ENCODE measurements at regions of chr18 and their contacts with region 1.

Region 1: GRCh38 chr18:21851327-21851972 is 110.9 kb downstream of the MIB1 start:
- DNase-seq: no peak
- ATAC-seq: no peak
- H3K4me3 ChIP-seq: peak overlapping the region in 1 of 10 donors; percentile 6
- H3K27ac ChIP-seq: no peak overlapping the region
- H3K4me1 ChIP-seq: peaks cover 0 to 13% (median 0%) of the 10 kb centered on the region in 9 donors
- H3K27me3 ChIP-seq: no peaks in the 10 kb centered on the region
- CTCF ChIP-seq: peak in 8 of 9 donors; percentile 11 to 69 (median 54)

Region 2: GRCh38 chr18:21489119-21489750 is 362.2 kb before region 1 on chr18:
- intact Hi-C with region 1: loop called in 3 of 10 experiments (anchors 5 to 10 kb)
- DNase-seq: peak in 1 of 2 donors; percentile 26
- ATAC-seq: peak in 7 of 8 donors; percentile 65 to 83 (median 72)
- H3K4me3 ChIP-seq: no peak overlapping the region
- H3K27ac ChIP-seq: no peak overlapping the region
- H3K4me1 ChIP-seq: peaks cover 0 to 6% (median 0%) of the 10 kb centered on the region in 9 donors
- H3K27me3 ChIP-seq: no peaks in the 10 kb centered on the region
- CTCF ChIP-seq: peak; percentile 35 to 75 (median 72)

Region 3: GRCh38 chr18:21612125-21612991 is 239.1 kb before region 1 on chr18 and contains the start of gene SNRPD1:
- intact Hi-C with region 1: loop called in 1 of 10 experiments (anchors 10 kb)
- DNase-seq: peak; percentile 87 to 90
- ATAC-seq: peak; percentile 99 to 100 (median 99)
- H3K4me3 ChIP-seq: peak within 1 kb of the TSS; percentile 58 to 97 (median 77)
- H3K27ac ChIP-seq: peak within 1 kb of the TSS; percentile 16 to 93 (median 82)
- H3K4me1 ChIP-seq: peaks cover 3 to 23% (median 20%) of the 10 kb centered on the region in 9 donors
- H3K27me3 ChIP-seq: no peaks in the 10 kb centered on the region
- CTCF ChIP-seq: peak; percentile 88 to 99 (median 95)
- total RNA-seq, gene SNRPD1: 13.8 to 36.3 (median 19.1) TPM

Region 4: GRCh38 chr18:21820035-21820810 is 31.2 kb before region 1 on chr18:
- intact Hi-C with region 1: loop called in 3 of 10 experiments (anchors 2 kb)
- DNase-seq: no peak
- ATAC-seq: peak in 1 of 8 donors; percentile 40
- H3K4me3 ChIP-seq: no peak overlapping the region
- H3K27ac ChIP-seq: no peak overlapping the region
- H3K4me1 ChIP-seq: no peaks in the 10 kb centered on the region
- H3K27me3 ChIP-seq: no peaks in the 10 kb centered on the region
- CTCF ChIP-seq: peak; percentile 32 to 72 (median 58)

Measured in heart right ventricle (tissue), 16 donors.